CD14-positive monocyte (primary cell): ENCODE measurements at regions of chr1 and their contacts with region 1.

Region 1: GRCh38 chr1:205523891-205524793 is 19.7 kb downstream of the CDK18 start:
- DNase-seq: peak; percentile 42 to 61 (median 61)
- H3K4me3 ChIP-seq: no peak overlapping the region
- H3K4me3 Mint-ChIP-seq: no peak overlapping the region
- H3K27ac ChIP-seq: no peak overlapping the region
- H3K27ac Mint-ChIP-seq: no peak overlapping the region
- H3K4me1 ChIP-seq: peaks cover 3 to 5% of the 10 kb centered on the region in 2 donors
- H3K4me1 Mint-ChIP-seq: peaks cover 4% of the 10 kb centered on the region
- H3K27me3 ChIP-seq: no peaks in the 10 kb centered on the region
- H3K27me3 Mint-ChIP-seq: peaks cover 1 to 3% (median 2%) of the 10 kb centered on the region in 3 donors
- CTCF ChIP-seq: peak; percentile 90

Region 2: DNA sequence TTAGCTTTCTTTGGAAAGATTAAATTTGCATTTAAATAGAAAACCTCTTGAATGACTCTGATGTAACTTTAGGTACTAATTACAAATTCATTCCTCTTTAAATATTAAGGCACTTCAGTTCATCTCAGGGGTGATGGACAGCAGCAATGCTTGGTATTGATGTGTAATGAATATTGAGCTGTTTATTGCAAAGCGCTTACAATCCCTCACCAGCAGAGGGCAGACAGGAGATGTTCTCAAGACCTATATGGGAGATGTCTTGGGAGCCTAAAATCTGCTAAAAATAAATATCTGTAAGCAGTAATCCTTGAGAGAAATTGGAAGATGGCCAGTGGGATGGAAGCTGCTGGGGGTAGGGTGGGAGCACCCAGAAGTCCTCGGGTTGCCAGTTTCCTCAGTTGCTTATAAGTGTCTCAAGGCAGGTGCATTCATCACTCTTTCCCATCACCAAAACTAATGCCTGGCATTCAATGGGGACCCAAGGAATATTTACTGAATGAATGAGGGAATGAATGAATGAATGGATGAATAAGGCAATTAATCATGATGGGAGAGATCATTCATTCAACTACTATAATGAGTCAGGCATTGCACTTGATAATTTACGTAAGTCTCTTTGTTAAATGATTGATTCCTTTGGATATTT is 169.8 kb before region 1 on chr1:
- intact Hi-C with region 1: loop called in 1 of 2 experiments (anchors 1 kb)
- DNase-seq: peak; percentile 35 to 51 (median 42)
- H3K4me3 ChIP-seq: no peak overlapping the region
- H3K4me3 Mint-ChIP-seq: no peak overlapping the region
- H3K27ac ChIP-seq: no peak overlapping the region
- H3K27ac Mint-ChIP-seq: no peak overlapping the region
- H3K4me1 ChIP-seq: peaks cover 1 to 2% of the 10 kb centered on the region in 2 donors
- H3K4me1 Mint-ChIP-seq: peaks cover 6% of the 10 kb centered on the region
- H3K27me3 ChIP-seq: peaks cover 2 to 4% of the 10 kb centered on the region in 2 donors
- H3K27me3 Mint-ChIP-seq: peaks cover 5 to 27% (median 20%) of the 10 kb centered on the region in 3 donors
- CTCF ChIP-seq: peak; percentile 90

Region 3: DNA sequence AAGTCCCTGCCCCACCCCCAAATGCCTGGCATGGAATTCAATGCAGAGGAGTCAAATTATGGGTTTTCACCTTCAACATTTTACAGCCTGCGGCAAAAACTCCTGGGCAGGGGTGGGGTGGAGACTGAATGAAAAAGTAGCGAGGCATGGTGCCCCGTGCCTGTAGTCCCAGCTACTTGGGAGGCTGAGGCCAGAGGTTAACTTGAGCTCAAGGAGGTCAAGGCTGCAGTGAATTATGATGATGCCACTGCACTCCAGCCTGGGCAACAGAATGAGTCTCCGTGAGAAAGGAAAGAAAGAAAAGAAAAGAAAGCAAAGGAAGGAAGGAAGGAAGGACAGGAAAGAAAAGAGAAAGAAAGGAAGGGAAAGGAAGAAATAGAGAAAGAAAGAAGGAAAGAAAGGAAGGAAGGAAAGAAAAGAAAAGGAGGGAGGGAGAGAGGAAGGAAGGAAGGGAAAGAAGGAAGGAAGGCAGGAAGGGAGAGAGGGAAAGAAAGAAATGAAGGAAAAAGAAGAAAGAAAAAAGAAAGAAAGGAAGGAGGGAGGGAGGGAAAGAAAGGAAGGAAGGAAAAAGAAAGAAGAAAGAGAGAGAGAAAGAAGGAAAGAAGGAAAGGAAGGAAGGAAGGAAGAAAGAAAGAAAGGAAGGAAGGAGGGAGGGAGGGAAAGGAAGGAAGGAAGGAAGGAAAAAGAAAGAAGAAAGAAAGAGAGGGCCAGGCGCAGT is 113.4 kb before region 1 on chr1:
- intact Hi-C with region 1: no loop called
- DNase-seq: no peak
- H3K4me3 ChIP-seq: no peak overlapping the region
- H3K4me3 Mint-ChIP-seq: peak overlapping the region in 1 of 2 donors; percentile 43
- H3K27ac ChIP-seq: no peak overlapping the region
- H3K27ac Mint-ChIP-seq: no peak overlapping the region
- H3K4me1 ChIP-seq: no peaks in the 10 kb centered on the region
- H3K4me1 Mint-ChIP-seq: no peaks in the 10 kb centered on the region
- H3K27me3 ChIP-seq: no peaks in the 10 kb centered on the region
- H3K27me3 Mint-ChIP-seq: peaks cover 12 to 20% (median 13%) of the 10 kb centered on the region in 3 donors
- CTCF ChIP-seq: no peak

Region 4: GRCh38 chr1:205485338-205486228 is 38.6 kb before region 1 on chr1:
- intact Hi-C with region 1: loop called (anchors 1 to 2 kb)
- DNase-seq: peak; percentile 42 to 59 (median 55)
- H3K4me3 ChIP-seq: no peak overlapping the region
- H3K4me3 Mint-ChIP-seq: peak overlapping the region in 1 of 2 donors; percentile 13
- H3K27ac ChIP-seq: no peak overlapping the region
- H3K27ac Mint-ChIP-seq: no peak overlapping the region
- H3K4me1 ChIP-seq: no peaks in the 10 kb centered on the region
- H3K4me1 Mint-ChIP-seq: peaks cover 9% of the 10 kb centered on the region
- H3K27me3 ChIP-seq: peaks cover 12 to 38% of the 10 kb centered on the region in 2 donors
- H3K27me3 Mint-ChIP-seq: peaks cover 53 to 62% (median 58%) of the 10 kb centered on the region in 3 donors
- CTCF ChIP-seq: peak; percentile 98